Activated B cell treated with CpG ODN at 0.5 μM for 24 hours (primary cell): ENCODE measurements at regions of chr6 and their contacts with region 1.

Region 1: GRCh38 chr6:4884646-4885340 is 108.6 kb downstream of the CDYL start:
- DNase-seq: no peak
- ATAC-seq: peak; percentile 45
- H3K4me3 Mint-ChIP-seq: no peak overlapping the region
- H3K27ac Mint-ChIP-seq: peak overlapping the region; percentile 15
- H3K4me1 Mint-ChIP-seq: peaks cover 93% of the 10 kb centered on the region
- H3K27me3 Mint-ChIP-seq: no peaks in the 10 kb centered on the region
- CTCF ChIP-seq: no peak

Region 2: GRCh38 chr6:4585682-4586468 is 298.9 kb before region 1 on chr6:
- CTCF ChIA-PET with region 1: no interaction called
- POLR2A ChIA-PET with region 1: no interaction called
- intact Hi-C with region 1: no loop called
- DNase-seq: no peak
- ATAC-seq: no peak
- H3K4me3 Mint-ChIP-seq: no peak overlapping the region
- H3K27ac Mint-ChIP-seq: no peak overlapping the region
- H3K4me1 Mint-ChIP-seq: no peaks in the 10 kb centered on the region
- H3K27me3 Mint-ChIP-seq: peaks cover 6% of the 10 kb centered on the region
- CTCF ChIP-seq: no peak

Region 3: GRCh38 chr6:4820704-4821276 is 64.0 kb before region 1 on chr6:
- CTCF ChIA-PET with region 1: no interaction called
- POLR2A ChIA-PET with region 1: no interaction called
- intact Hi-C with region 1: no loop called
- DNase-seq: no peak
- ATAC-seq: no peak
- H3K4me3 Mint-ChIP-seq: no peak overlapping the region
- H3K27ac Mint-ChIP-seq: no peak overlapping the region
- H3K4me1 Mint-ChIP-seq: peaks cover 46% of the 10 kb centered on the region
- H3K27me3 Mint-ChIP-seq: no peaks in the 10 kb centered on the region
- CTCF ChIP-seq: no peak

Region 4: DNA sequence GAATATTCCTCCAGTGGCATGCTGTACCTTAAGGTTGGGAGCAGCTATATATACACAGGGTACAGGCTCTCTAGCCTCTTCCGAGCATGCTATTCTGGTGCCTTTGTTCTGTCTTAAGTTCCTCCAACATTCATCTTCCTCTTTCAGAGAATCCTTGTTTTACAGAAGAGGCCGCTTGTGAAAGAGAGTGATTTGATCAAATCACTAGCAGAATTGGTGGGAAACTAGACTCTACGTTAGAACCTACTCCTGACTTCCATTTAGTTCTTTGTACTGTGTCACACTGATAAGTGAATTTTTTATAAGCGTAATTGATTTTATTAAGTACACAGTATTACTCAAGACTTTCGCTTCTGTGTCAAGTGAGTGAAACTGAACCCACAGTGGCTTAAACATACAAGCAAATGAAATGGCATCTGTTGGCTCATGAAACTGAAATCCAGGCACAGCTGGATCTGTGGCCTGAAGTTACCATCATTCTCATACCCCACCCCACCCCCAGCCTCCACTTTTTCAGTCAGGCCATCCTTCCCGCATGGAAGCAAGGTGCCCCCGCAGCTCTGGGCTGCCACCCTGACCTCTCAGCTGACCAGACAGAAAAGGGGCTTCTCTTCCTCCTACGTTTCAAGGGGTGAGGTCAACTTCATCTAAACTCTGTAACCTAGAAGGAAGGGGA is 16.7 kb after region 1 on chr6:
- CTCF ChIA-PET with region 1: interaction called, 3 read pairs
- POLR2A ChIA-PET with region 1: no interaction called
- intact Hi-C with region 1: loop called (anchors 2 kb)
- DNase-seq: no peak
- ATAC-seq: peak; percentile 42
- H3K4me3 Mint-ChIP-seq: no peak overlapping the region
- H3K27ac Mint-ChIP-seq: peak overlapping the region; percentile 75
- H3K4me1 Mint-ChIP-seq: peaks cover 35% of the 10 kb centered on the region
- H3K27me3 Mint-ChIP-seq: no peaks in the 10 kb centered on the region
- CTCF ChIP-seq: no peak

Region 5: GRCh38 chr6:5712349-5713215 is 827.8 kb after region 1 on chr6:
- CTCF ChIA-PET with region 1: no interaction called
- POLR2A ChIA-PET with region 1: no interaction called
- intact Hi-C with region 1: no loop called
- DNase-seq: no peak
- ATAC-seq: no peak
- H3K4me3 Mint-ChIP-seq: no peak overlapping the region
- H3K27ac Mint-ChIP-seq: no peak overlapping the region
- H3K4me1 Mint-ChIP-seq: peaks cover 17% of the 10 kb centered on the region
- H3K27me3 Mint-ChIP-seq: no peaks in the 10 kb centered on the region
- CTCF ChIP-seq: no peak